Activated B cell treated with CpG ODN at 0.5 μM for 24 hours (primary cell): ENCODE measurements at regions of chr4 and their contacts with region 1.

Region 1: DNA sequence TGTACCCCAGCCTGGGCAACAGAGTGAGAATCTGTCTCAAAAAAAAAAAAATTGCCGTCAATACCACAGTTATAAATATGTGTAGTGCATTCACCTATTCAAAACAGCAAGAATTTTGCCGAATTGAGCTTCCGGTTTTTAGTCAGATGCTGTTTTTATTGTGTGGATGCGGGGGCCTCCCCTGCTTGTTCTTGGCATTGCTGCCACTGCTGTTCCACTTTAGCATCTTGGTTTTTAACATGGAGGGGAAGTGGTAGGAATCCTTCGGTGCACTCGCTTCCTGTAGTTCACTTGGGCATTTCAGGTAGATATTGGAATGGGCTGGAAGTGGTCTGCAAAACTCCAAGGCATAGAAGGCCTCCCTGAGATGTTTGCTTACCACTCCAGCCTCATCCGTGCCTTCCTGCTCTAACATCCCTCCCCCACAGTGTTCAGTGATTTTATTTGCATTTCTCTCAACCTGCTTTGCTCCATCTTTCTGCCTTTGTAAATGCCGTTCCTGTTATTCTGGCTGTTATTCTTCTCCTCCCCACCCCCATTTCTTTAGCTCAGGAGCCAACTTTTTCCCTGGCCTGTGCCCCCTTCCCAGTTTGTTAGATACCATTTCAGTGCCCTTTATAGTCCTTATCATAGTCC is 25.5 kb downstream of the MOB1B start:
- DNase-seq: no peak
- ATAC-seq: peak; percentile 45
- H3K4me3 Mint-ChIP-seq: peak overlapping the region; percentile 33
- H3K27ac Mint-ChIP-seq: peak overlapping the region; percentile 68
- H3K4me1 Mint-ChIP-seq: peaks cover 51% of the 10 kb centered on the region
- H3K27me3 Mint-ChIP-seq: no peaks in the 10 kb centered on the region
- CTCF ChIP-seq: no peak

Region 2: GRCh38 chr4:70863099-70863790 is 64.4 kb before region 1 on chr4:
- CTCF ChIA-PET with region 1: no interaction called
- POLR2A ChIA-PET with region 1: no interaction called
- intact Hi-C with region 1: no loop called
- DNase-seq: no peak
- ATAC-seq: no peak
- H3K4me3 Mint-ChIP-seq: no peak overlapping the region
- H3K27ac Mint-ChIP-seq: peak overlapping the region; percentile 36
- H3K4me1 Mint-ChIP-seq: peaks cover 5% of the 10 kb centered on the region
- H3K27me3 Mint-ChIP-seq: no peaks in the 10 kb centered on the region
- CTCF ChIP-seq: no peak

Region 3: GRCh38 chr4:70885174-70885573 is 42.4 kb before region 1 on chr4:
- CTCF ChIA-PET with region 1: no interaction called
- POLR2A ChIA-PET with region 1: no interaction called
- intact Hi-C with region 1: no loop called
- DNase-seq: no peak
- ATAC-seq: no peak
- H3K4me3 Mint-ChIP-seq: no peak overlapping the region
- H3K27ac Mint-ChIP-seq: no peak overlapping the region
- H3K4me1 Mint-ChIP-seq: no peaks in the 10 kb centered on the region
- H3K27me3 Mint-ChIP-seq: no peaks in the 10 kb centered on the region
- CTCF ChIP-seq: no peak

Region 4: GRCh38 chr4:70943114-70943513 is 15.5 kb after region 1 on chr4:
- CTCF ChIA-PET with region 1: no interaction called
- POLR2A ChIA-PET with region 1: interaction called, 9 read pairs
- intact Hi-C with region 1: loop called (anchors 1 kb)
- DNase-seq: no peak
- ATAC-seq: peak; percentile 78
- H3K4me3 Mint-ChIP-seq: no peak overlapping the region
- H3K27ac Mint-ChIP-seq: peak overlapping the region; percentile 59
- H3K4me1 Mint-ChIP-seq: peaks cover 37% of the 10 kb centered on the region
- H3K27me3 Mint-ChIP-seq: no peaks in the 10 kb centered on the region
- CTCF ChIP-seq: no peak

Region 5: DNA sequence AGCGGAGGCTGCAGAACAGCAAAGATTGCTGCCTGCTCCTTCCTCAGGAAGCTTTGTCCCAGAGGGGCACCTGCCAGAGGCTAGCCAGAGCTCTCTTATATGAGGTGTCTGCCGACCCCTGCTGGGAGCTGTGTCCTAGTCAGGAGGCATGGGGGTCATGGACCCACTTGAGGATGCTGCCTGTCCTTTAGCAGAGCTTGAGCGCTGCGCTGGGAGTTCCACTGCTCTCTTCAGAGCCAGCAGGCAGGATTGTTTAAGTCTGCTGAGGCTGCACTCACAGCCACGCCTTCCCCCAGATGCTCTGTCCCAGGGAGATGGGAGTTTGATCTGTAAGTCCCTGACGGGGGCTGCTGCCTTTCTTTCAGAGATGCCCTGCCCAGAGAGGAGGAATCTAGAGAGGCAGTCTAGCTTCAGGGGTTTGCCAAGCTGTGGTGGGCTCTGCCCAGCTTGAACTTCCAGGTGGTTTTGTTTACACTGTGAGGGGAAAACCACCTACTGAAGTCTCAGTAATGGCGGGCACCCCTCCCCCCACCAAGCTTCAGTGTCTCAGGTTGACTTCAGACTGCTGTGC is 76.7 kb after region 1 on chr4:
- CTCF ChIA-PET with region 1: no interaction called
- POLR2A ChIA-PET with region 1: interaction called, 5 read pairs
- intact Hi-C with region 1: loop called (anchors 2 kb)
- DNase-seq: peak; percentile 52
- ATAC-seq: peak; percentile 63
- H3K4me3 Mint-ChIP-seq: peak overlapping the region; percentile 75
- H3K27ac Mint-ChIP-seq: peak overlapping the region; percentile 84
- H3K4me1 Mint-ChIP-seq: peaks cover 95% of the 10 kb centered on the region
- H3K27me3 Mint-ChIP-seq: no peaks in the 10 kb centered on the region
- CTCF ChIP-seq: no peak